ENCODE measurements at regions of chr5 and their contacts with region 1.

Region 1: GRCh38 chr5:147887024-147887627 is 8.6 kb downstream of the SCGB3A2 start:
- DNase-seq: no peak
- ATAC-seq: no peak
- H3K4me3 ChIP-seq: no peak overlapping the region
- H3K27ac ChIP-seq: no peak overlapping the region
- H3K4me1 ChIP-seq: no peaks in the 10 kb centered on the region
- H3K27me3 ChIP-seq: no peaks in the 10 kb centered on the region
- CTCF ChIP-seq: peak; percentile 31 to 41 (median 36); a peak in 4 of 6 replicates
- EP300 ChIP-seq: no peak
- POLR2A ChIP-seq: no peak
- RAD21 ChIP-seq: peak; percentile 33; the same call in 1 of the 2 replicates

Region 2: GRCh38 chr5:147935032-147935431 is 47.9 kb after region 1 on chr5:
- CTCF ChIA-PET with region 1: interaction called, 4 read pairs
- POLR2A ChIA-PET with region 1: no interaction called
- RAD21 ChIA-PET with region 1: interaction called, 3 read pairs
- SMC1A ChIA-PET with region 1: interaction called, 4 read pairs
- in situ Hi-C with region 1: no loop called
- intact Hi-C with region 1: loop called (anchors 2 kb)
- DNase-seq: no peak
- ATAC-seq: no peak
- H3K4me3 ChIP-seq: no peak overlapping the region
- H3K27ac ChIP-seq: no peak overlapping the region
- H3K4me1 ChIP-seq: no peaks in the 10 kb centered on the region
- H3K27me3 ChIP-seq: no peaks in the 10 kb centered on the region
- CTCF ChIP-seq: peak in 1 of 3 experiments; percentile 13; a peak in 2 of 6 replicates
- EP300 ChIP-seq: no peak
- POLR2A ChIP-seq: no peak
- RAD21 ChIP-seq: peak; percentile 29; the same call in 1 of the 2 replicates

Region 3: GRCh38 chr5:148353634-148354033 is 466.5 kb after region 1 on chr5:
- CTCF ChIA-PET with region 1: no interaction called
- POLR2A ChIA-PET with region 1: no interaction called
- RAD21 ChIA-PET with region 1: no interaction called
- SMC1A ChIA-PET with region 1: no interaction called
- in situ Hi-C with region 1: no loop called
- intact Hi-C with region 1: loop called (anchors 5 kb)
- DNase-seq: no peak
- ATAC-seq: no peak
- H3K4me3 ChIP-seq: no peak overlapping the region
- H3K27ac ChIP-seq: no peak overlapping the region
- H3K4me1 ChIP-seq: no peaks in the 10 kb centered on the region
- H3K27me3 ChIP-seq: no peaks in the 10 kb centered on the region
- CTCF ChIP-seq: peak in 1 of 3 experiments; percentile 14; a peak in 1 of 6 replicates
- EP300 ChIP-seq: no peak
- POLR2A ChIP-seq: no peak
- RAD21 ChIP-seq: no peak

Measured in GM12878 (cell line).